Activated naive CD4-positive, alpha-beta T cell treated with anti-CD3 and anti-CD28 coated beads for 36 hours (primary cell): ENCODE measurements at regions of chr11 and their contacts with region 1.

Region 1: DNA sequence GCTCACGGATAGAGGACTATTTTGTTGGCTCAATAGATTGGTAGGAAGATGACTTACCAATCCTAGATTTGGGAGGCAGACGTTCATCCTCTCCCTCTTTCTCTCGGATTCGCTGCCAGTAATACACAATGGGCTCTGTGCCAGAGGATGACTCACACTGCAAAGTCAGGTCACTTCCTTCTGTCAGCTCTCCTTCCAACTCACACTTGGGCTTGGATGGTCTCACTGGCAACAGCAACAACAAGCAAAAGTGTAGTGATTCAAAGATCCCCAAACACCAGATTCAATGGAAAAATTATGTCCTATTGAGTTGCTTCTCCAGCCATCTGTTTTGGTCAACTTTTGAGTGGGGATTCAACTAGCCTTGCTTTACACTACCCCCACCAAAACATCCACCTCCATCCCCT is 21.7 kb upstream of the HSPA8 start:
- DNase-seq: peak; percentile 92
- H3K4me3 Mint-ChIP-seq: peak overlapping the region; percentile 45
- H3K27ac Mint-ChIP-seq: peak overlapping the region; percentile 73
- H3K4me1 Mint-ChIP-seq: peaks cover 71% of the 10 kb centered on the region
- H3K27me3 Mint-ChIP-seq: no peaks in the 10 kb centered on the region

Region 2: GRCh38 chr11:122976734-122977469 is 106.7 kb before region 1 on chr11:
- CTCF ChIA-PET with region 1: no interaction called
- intact Hi-C with region 1: no loop called
- DNase-seq: no peak
- H3K4me3 Mint-ChIP-seq: peak overlapping the region; percentile 54
- H3K27ac Mint-ChIP-seq: no peak overlapping the region
- H3K4me1 Mint-ChIP-seq: peaks cover 28% of the 10 kb centered on the region
- H3K27me3 Mint-ChIP-seq: peaks cover 82% of the 10 kb centered on the region

Region 3: GRCh38 chr11:123047266-123047946 is 36.2 kb before region 1 on chr11:
- CTCF ChIA-PET with region 1: no interaction called
- intact Hi-C with region 1: no loop called
- DNase-seq: no peak
- H3K4me3 Mint-ChIP-seq: no peak overlapping the region
- H3K27ac Mint-ChIP-seq: no peak overlapping the region
- H3K4me1 Mint-ChIP-seq: no peaks in the 10 kb centered on the region
- H3K27me3 Mint-ChIP-seq: no peaks in the 10 kb centered on the region

Region 4: GRCh38 chr11:123069908-123070821 is 13.5 kb before region 1 on chr11:
- CTCF ChIA-PET with region 1: interaction called, 8 read pairs
- intact Hi-C with region 1: loop called (anchors 1 kb)
- DNase-seq: peak; percentile 46
- H3K4me3 Mint-ChIP-seq: peak overlapping the region; percentile 58
- H3K27ac Mint-ChIP-seq: peak overlapping the region; percentile 97
- H3K4me1 Mint-ChIP-seq: peaks cover 63% of the 10 kb centered on the region
- H3K27me3 Mint-ChIP-seq: no peaks in the 10 kb centered on the region